ENCODE measurements at regions of chr17 and their contacts with region 1.

Region 1: GRCh38 chr17:1055751-1056645 is 59.1 kb downstream of the TIMM22 start:
- DNase-seq: peak in 1 of 2 experiments; percentile 87
- H3K4me3 ChIP-seq: no peak overlapping the region
- H3K27ac ChIP-seq: no peak overlapping the region
- H3K4me1 ChIP-seq: no peaks in the 10 kb centered on the region
- H3K27me3 ChIP-seq: no peaks in the 10 kb centered on the region
- CTCF ChIP-seq: peak; percentile 76 to 81 (median 77)
- EP300 ChIP-seq: no peak
- POLR2A ChIP-seq: no peak
- RAD21 ChIP-seq: peak; percentile 85 to 86

Region 2: DNA sequence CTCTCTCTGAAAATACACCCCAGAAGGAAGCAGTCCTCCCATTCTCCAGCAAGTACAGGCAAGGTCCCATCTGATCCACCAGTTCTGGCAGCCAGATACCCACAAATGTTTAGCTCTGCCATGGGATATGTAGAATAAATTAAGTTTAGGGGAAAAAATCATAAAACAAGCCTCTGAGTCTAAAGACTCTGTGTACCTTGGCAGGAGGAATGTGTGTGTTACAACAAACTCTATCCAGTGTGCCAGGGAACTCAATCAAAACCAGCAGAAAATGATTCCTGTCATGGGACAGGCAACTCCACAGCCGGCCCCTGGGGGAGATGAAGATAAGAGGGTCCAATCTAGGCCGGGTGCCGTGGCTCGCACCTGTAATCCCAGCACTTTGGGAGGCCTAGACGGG is 200.4 kb before region 1 on chr17:
- CTCF ChIA-PET with region 1: no interaction called
- POLR2A ChIA-PET with region 1: no interaction called
- DNase-seq: no peak
- H3K4me3 ChIP-seq: no peak overlapping the region
- H3K27ac ChIP-seq: no peak overlapping the region
- H3K4me1 ChIP-seq: peaks cover 0 to 5% (median under 1%) of the 10 kb centered on the region in 4 experiments; a peak in 2 of 7 replicates
- H3K27me3 ChIP-seq: no peaks in the 10 kb centered on the region; a peak in 1 of 7 replicates
- CTCF ChIP-seq: no peak
- EP300 ChIP-seq: no peak
- POLR2A ChIP-seq: no peak
- RAD21 ChIP-seq: no peak

Region 3: GRCh38 chr17:956905-957304 is 99.1 kb before region 1 on chr17:
- CTCF ChIA-PET with region 1: no interaction called
- POLR2A ChIA-PET with region 1: no interaction called
- DNase-seq: no peak
- H3K4me3 ChIP-seq: no peak overlapping the region
- H3K27ac ChIP-seq: no peak overlapping the region
- H3K4me1 ChIP-seq: peaks cover 2 to 9% (median 5%) of the 10 kb centered on the region in 4 experiments; a peak in 6 of 7 replicates
- H3K27me3 ChIP-seq: no peaks in the 10 kb centered on the region
- CTCF ChIP-seq: no peak
- EP300 ChIP-seq: no peak
- POLR2A ChIP-seq: no peak
- RAD21 ChIP-seq: no peak

Region 4: DNA sequence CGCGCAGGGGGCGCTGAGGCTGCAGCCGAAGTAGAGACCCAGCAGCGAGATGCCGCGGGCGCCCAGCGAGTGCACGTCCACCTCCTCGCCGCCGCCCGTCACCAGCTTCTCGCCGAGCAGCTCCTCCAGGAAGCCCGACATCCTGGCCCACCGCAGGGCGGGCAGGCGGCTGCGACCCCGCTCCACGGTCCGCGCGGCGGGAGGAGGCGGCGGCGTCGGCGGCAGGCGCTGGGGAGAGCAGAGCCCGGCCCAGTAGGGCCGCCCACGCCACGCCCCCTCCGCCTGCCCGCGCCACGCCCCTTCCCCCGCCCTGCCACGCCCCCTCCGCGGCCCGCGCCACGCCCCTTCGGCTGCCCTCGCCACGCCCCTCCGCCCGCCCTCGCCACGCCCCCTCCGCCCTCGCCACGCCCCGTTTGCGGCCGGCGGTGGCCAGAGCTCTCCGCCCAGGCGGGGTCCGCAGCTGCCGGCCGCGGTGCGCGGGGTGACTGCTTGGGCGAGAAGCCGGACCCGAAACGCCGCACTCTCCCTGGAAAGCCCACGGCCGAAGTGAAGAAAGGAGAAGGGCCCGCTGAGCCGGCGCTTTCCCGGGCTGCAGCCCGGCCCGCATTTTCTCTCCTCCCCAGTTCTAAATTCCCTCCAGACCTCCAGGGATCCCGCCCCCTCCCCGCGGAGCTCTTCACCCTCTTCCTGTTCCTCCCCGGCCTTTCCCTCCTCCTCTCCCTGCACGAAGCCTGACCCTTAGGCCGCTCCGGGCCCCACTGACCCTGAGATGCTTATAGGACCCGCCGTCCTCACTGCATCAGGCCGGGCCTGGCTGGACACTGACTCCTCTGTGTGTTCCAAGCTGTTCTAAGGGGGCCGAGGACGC is 76.2 kb before region 1 on chr17 and contains the start of gene NXN:
- CTCF ChIA-PET with region 1: interaction called, 14 read pairs
- POLR2A ChIA-PET with region 1: no interaction called
- DNase-seq: peak in 1 of 2 experiments; percentile 98
- H3K4me3 ChIP-seq: peak within 1 kb of the TSS; percentile 73 to 81 (median 76)
- H3K27ac ChIP-seq: peak within 1 kb of the TSS; percentile 31; the same call in 1 of the 2 replicates
- H3K4me1 ChIP-seq: peaks cover 5 to 22% (median 12%) of the 10 kb centered on the region in 4 experiments
- H3K27me3 ChIP-seq: no peaks in the 10 kb centered on the region
- CTCF ChIP-seq: peak in 2 of 3 experiments; percentile 18 to 38; a peak in 3 of 4 replicates
- EP300 ChIP-seq: no peak
- POLR2A ChIP-seq: peak in 1 of 2 experiments; percentile 67; a peak in 2 of 3 replicates
- RAD21 ChIP-seq: peak; percentile 17 to 38; a peak in 2 of 4 replicates
- total RNA-seq, gene NXN: 88.4 and 94.1 TPM in 2 replicates

Region 5: DNA sequence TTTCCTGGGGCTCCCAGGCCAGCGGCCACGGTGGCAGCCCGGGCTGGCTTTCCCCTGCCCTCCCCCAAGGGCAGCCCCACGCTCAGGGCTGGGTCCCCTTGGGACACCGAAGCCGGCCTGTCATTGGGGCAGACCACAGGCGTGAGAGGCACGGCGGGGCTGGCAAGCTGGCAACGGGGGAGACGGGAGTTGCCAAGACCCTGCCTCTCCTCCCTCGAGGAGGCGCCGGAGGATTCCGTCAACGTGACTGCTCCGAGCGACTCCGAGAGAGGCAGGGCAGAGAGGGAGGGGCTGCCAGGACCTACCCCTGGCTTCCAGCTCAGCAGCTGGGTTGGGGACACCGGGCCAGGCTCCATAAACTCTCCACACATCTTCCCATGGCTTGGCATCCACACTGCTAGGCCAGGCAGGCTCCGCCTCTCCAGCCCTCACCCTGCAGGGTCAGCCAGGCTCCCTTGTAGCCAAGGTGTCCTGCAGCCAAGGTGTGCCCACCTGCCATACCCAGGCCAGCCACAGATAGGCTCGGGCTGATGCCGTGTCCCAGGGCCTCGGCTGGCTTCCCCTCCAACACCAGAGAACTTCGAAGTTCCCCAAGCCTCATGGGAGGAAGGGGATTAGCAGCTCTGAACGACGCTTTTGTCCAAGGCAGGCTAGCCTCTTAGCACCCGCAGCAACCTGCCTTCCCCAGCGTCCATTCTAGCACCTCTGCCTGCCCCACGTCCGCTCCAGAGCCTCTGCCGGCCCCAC is 33.5 kb before region 1 on chr17:
- CTCF ChIA-PET with region 1: interaction called, 29 read pairs
- POLR2A ChIA-PET with region 1: no interaction called
- DNase-seq: no peak
- H3K4me3 ChIP-seq: no peak overlapping the region
- H3K27ac ChIP-seq: no peak overlapping the region
- H3K4me1 ChIP-seq: no peaks in the 10 kb centered on the region
- H3K27me3 ChIP-seq: no peaks in the 10 kb centered on the region
- CTCF ChIP-seq: no peak
- EP300 ChIP-seq: no peak
- POLR2A ChIP-seq: no peak
- RAD21 ChIP-seq: no peak

Region 6: DNA sequence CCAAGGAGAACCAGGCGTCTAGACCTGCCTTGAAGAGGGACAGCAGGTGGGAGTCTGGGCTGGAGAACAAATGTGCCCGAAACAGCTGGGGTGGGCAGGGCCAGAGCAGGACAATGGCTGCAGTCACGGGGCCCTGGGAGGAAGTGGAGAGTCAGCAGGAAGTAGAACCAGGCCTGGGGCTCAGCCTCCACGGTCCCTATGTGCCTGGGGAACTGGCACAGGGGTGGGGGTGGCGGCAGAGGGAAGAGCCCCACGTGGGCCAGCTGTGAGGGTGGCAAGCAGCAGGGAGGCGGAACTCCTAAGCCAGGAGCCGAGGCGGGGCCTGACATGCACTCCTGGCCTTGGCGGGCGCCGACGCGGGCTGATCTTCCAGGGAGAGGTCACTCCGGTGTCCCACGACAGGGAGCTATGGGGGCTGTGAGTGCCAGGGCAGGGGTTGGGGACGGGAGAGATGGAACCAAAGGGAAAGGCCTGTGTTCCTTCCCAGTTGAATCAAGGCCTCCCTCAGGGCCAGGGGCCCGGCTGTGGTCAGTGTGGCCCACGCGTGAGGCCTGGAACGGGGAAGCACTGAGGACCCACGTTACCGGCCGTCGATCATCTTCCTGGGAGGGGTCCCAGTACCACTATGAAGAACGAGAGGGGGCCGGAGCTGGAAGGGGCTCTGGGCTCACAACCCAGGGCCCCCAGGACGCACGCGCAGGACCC is 16.3 kb before region 1 on chr17:
- CTCF ChIA-PET with region 1: interaction called, 41 read pairs
- POLR2A ChIA-PET with region 1: no interaction called
- DNase-seq: no peak
- H3K4me3 ChIP-seq: no peak overlapping the region
- H3K27ac ChIP-seq: no peak overlapping the region
- H3K4me1 ChIP-seq: peaks cover 0 to 11% (median 8%) of the 10 kb centered on the region in 4 experiments; a peak in 6 of 7 replicates
- H3K27me3 ChIP-seq: 0 out of 7 replicates have a peak, but pooled peaks cover 0 to 2% (median 0%) of the 10 kb centered on the region in 4 experiments
- CTCF ChIP-seq: no peak
- EP300 ChIP-seq: no peak
- POLR2A ChIP-seq: no peak
- RAD21 ChIP-seq: no peak

Region 7: DNA sequence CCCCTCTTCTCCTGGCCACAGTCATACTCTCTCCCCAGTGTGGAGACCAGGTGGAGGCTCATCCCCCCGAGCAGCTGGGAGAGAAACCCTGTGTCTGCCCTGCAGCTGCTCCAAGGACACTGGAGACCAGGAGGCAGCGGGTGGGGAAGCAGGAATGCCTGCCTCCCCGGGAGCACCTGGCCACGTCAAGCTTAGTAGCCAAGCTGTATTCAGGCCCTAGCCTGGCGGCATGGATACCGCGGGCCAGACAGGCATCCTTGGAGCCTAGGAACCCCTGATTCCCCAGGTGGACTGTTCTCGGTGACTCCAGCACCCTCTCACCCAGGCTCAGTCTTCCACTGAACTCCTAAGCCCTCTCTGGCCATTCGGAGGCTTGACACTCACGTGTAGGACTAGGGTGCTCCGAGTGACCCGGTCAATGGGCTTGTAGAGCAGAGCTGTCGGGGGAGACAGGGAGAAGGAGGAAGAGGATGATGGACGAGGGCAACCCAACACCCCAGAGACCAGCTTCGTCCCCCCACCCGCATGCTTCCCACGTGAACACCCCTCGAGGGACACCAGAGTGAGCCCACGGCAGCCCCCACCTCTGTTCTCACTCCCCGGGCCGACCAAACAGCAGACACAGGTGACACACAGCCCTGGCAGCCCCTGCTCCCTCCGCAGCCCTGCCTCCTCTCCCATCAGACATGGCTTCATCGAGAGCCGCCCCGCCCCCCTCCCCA is 17.4 kb after region 1 on chr17:
- CTCF ChIA-PET with region 1: interaction called, 17 read pairs
- POLR2A ChIA-PET with region 1: no interaction called
- DNase-seq: no peak
- H3K4me3 ChIP-seq: no peak overlapping the region
- H3K27ac ChIP-seq: no peak overlapping the region
- H3K4me1 ChIP-seq: peaks cover 0 to 21% (median 9%) of the 10 kb centered on the region in 4 experiments; a peak in 6 of 7 replicates
- H3K27me3 ChIP-seq: no peaks in the 10 kb centered on the region
- CTCF ChIP-seq: no peak
- EP300 ChIP-seq: no peak
- POLR2A ChIP-seq: no peak
- RAD21 ChIP-seq: no peak

Region 8: DNA sequence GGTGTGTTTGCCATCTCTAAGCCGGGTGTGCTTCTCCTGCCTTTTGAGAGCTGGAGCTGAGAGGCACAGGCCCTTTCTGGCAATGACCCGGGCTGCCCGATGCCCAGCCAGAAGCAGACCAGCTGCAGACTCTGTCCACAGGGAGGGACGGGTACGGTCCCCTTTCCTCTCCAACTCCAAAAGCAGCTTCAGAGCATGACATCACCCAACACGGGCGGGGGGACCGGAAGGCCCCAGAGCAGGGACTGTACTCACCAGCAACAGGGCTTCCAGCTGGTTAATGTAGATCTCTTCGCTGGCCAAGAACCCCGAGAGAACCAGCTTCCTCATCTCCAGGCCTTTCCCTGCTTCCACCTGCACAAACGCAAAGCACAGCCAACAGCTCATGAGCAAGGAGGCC is 44.4 kb after region 1 on chr17:
- CTCF ChIA-PET with region 1: interaction called, 11 read pairs
- POLR2A ChIA-PET with region 1: no interaction called
- DNase-seq: no peak
- H3K4me3 ChIP-seq: no peak overlapping the region
- H3K27ac ChIP-seq: no peak overlapping the region
- H3K4me1 ChIP-seq: no peaks in the 10 kb centered on the region; a peak in 1 of 7 replicates
- H3K27me3 ChIP-seq: no peaks in the 10 kb centered on the region; a peak in 1 of 7 replicates
- CTCF ChIP-seq: no peak
- EP300 ChIP-seq: no peak
- POLR2A ChIP-seq: no peak
- RAD21 ChIP-seq: no peak

Measured in H1 (cell line).